Prostate gland (tissue), 2 donors: ENCODE measurements at regions of chr3 and their contacts with region 1.

Region 1: GRCh38 chr3:149273096-149273751 is 51.6 kb upstream of the CP start:
- DNase-seq: peak; percentile 51
- H3K4me3 ChIP-seq: no peak overlapping the region
- H3K27ac ChIP-seq: no peak overlapping the region
- H3K4me1 ChIP-seq: no peaks in the 10 kb centered on the region
- H3K27me3 ChIP-seq: no peaks in the 10 kb centered on the region
- CTCF ChIP-seq: peak; percentile 88 to 96 (median 94)
- POLR2A ChIP-seq: no peak

Region 2: GRCh38 chr3:149061776-149062175 is 211.4 kb before region 1 on chr3:
- intact Hi-C with region 1: no loop called
- DNase-seq: no peak
- H3K4me3 ChIP-seq: no peak overlapping the region
- H3K27ac ChIP-seq: no peak overlapping the region
- H3K4me1 ChIP-seq: no peaks in the 10 kb centered on the region
- H3K27me3 ChIP-seq: no peaks in the 10 kb centered on the region
- CTCF ChIP-seq: no peak
- POLR2A ChIP-seq: no peak

Region 3: DNA sequence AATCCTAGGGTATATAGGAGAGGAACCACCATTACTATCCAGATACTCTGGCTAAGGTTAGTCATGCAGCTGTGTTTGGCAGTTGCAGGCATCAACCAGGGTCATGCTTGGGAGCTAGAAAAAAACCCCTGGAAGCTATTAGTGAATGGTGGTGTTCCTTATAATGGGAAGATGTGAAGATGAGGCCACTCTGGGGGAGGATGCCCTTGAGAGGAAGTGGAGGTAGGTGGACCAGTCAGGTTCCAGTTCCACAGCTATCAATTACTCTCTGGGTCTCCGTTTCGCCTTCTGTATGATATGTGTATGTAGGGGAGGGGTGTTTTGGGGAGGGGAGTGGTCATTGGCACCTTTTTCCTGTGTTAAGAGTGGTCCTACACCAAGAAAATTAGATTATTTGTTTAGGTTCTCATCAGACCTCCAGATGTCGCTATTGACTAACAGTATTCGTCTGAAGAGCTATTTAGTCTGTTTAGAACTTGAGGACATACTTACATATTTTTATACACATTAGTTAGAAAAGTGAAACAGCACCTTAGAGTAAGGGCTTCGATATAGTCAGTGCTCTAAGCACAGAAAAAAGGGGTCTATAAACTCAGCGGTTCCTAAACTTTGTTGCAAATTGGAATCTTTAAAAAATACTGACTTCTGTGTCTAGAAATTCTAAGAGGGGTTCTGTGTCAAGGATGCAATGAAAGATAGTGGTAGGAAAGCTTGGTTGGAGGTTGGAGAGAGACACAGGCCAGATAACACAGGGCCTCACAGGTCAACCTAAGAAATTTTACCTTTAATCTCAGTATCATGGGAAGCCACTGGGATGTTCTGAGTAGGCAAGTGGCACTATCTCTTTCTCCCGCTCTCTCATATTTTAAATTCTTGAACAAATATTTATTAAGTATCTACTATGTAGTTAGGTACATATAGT is 152.9 kb before region 1 on chr3:
- intact Hi-C with region 1: loop called (anchors 2 kb)
- DNase-seq: peak; percentile 23
- H3K4me3 ChIP-seq: no peak overlapping the region
- H3K27ac ChIP-seq: no peak overlapping the region
- H3K4me1 ChIP-seq: no peaks in the 10 kb centered on the region
- H3K27me3 ChIP-seq: no peaks in the 10 kb centered on the region
- CTCF ChIP-seq: peak; percentile 39 to 80 (median 70)
- POLR2A ChIP-seq: no peak

Region 4: GRCh38 chr3:149203758-149204157 is 69.5 kb before region 1 on chr3:
- intact Hi-C with region 1: no loop called
- DNase-seq: no peak
- H3K4me3 ChIP-seq: no peak overlapping the region
- H3K27ac ChIP-seq: no peak overlapping the region
- H3K4me1 ChIP-seq: no peaks in the 10 kb centered on the region
- H3K27me3 ChIP-seq: no peaks in the 10 kb centered on the region
- CTCF ChIP-seq: no peak
- POLR2A ChIP-seq: no peak

Region 5: DNA sequence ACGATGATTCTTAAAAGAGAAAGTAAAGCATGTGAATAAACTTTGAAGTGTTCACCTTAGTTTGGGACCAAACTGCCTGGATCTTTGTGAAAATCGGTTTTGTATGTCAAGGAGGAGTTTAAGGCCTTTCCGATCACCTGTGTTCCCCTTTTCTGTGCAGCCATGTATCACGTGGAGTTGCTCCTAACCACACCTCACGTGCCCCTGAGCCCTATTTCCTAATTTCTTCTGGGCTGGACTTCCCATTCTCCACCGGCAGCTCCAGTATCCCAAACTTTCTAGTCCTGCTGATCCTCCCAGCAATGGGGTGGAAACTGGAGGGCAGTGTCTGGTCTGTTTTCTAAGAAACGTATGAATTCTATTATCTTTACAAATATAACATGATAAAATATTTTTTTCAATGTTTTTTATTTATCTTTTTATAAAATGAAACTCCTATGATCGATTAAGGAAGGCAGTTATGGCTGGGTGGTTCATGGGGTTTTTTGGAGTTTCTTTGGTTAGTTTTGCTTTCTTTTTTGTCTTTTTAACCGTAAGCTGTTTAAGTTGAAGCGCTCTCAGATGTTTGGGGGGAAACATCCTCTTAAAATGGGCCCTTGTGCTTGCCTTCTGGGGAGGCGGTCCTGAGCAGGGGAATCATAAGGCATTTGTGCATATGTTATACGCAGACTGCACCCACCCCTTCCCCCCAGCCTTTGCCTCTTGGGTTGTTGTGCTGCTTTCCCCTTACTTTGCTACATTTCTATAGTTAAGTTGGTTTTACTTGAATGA is 428.2 kb after region 1 on chr3:
- intact Hi-C with region 1: no loop called
- DNase-seq: no peak
- H3K4me3 ChIP-seq: no peak overlapping the region
- H3K27ac ChIP-seq: no peak overlapping the region
- H3K4me1 ChIP-seq: no peaks in the 10 kb centered on the region
- H3K27me3 ChIP-seq: no peaks in the 10 kb centered on the region
- CTCF ChIP-seq: no peak
- POLR2A ChIP-seq: no peak